H1 (cell line): ENCODE measurements at regions of chr3 and their contacts with region 1.

Region 1: GRCh38 chr3:187112934-187113793 is 26.1 kb downstream of the RPL39L start:
- DNase-seq: no peak
- H3K4me3 ChIP-seq: no peak overlapping the region
- H3K27ac ChIP-seq: no peak overlapping the region
- H3K4me1 ChIP-seq: no peaks in the 10 kb centered on the region
- H3K27me3 ChIP-seq: no peaks in the 10 kb centered on the region
- CTCF ChIP-seq: peak in 2 of 3 experiments; percentile 38 to 42; a peak in 2 of 4 replicates
- EP300 ChIP-seq: no peak
- POLR2A ChIP-seq: no peak
- RAD21 ChIP-seq: peak; percentile 47 to 57

Region 2: GRCh38 chr3:187101184-187102072 is 11.7 kb before region 1 on chr3:
- CTCF ChIA-PET with region 1: interaction called, 35 read pairs
- POLR2A ChIA-PET with region 1: interaction called, 3 read pairs
- DNase-seq: no peak
- H3K4me3 ChIP-seq: no peak overlapping the region
- H3K27ac ChIP-seq: no peak overlapping the region
- H3K4me1 ChIP-seq: peaks cover 0 to 7% (median 1%) of the 10 kb centered on the region in 4 experiments; a peak in 3 of 7 replicates
- H3K27me3 ChIP-seq: no peaks in the 10 kb centered on the region
- CTCF ChIP-seq: no peak
- EP300 ChIP-seq: no peak
- POLR2A ChIP-seq: no peak
- RAD21 ChIP-seq: no peak

Region 3: GRCh38 chr3:187130346-187131066 is 17.3 kb after region 1 on chr3:
- CTCF ChIA-PET with region 1: interaction called, 27 read pairs
- POLR2A ChIA-PET with region 1: interaction called, 3 read pairs
- DNase-seq: no peak
- H3K4me3 ChIP-seq: no peak overlapping the region
- H3K27ac ChIP-seq: no peak overlapping the region
- H3K4me1 ChIP-seq: no peaks in the 10 kb centered on the region
- H3K27me3 ChIP-seq: peaks cover 0 to 2% (median 0%) of the 10 kb centered on the region in 4 experiments; a peak in 1 of 7 replicates
- CTCF ChIP-seq: no peak
- EP300 ChIP-seq: no peak
- POLR2A ChIP-seq: no peak
- RAD21 ChIP-seq: no peak

Region 4: DNA sequence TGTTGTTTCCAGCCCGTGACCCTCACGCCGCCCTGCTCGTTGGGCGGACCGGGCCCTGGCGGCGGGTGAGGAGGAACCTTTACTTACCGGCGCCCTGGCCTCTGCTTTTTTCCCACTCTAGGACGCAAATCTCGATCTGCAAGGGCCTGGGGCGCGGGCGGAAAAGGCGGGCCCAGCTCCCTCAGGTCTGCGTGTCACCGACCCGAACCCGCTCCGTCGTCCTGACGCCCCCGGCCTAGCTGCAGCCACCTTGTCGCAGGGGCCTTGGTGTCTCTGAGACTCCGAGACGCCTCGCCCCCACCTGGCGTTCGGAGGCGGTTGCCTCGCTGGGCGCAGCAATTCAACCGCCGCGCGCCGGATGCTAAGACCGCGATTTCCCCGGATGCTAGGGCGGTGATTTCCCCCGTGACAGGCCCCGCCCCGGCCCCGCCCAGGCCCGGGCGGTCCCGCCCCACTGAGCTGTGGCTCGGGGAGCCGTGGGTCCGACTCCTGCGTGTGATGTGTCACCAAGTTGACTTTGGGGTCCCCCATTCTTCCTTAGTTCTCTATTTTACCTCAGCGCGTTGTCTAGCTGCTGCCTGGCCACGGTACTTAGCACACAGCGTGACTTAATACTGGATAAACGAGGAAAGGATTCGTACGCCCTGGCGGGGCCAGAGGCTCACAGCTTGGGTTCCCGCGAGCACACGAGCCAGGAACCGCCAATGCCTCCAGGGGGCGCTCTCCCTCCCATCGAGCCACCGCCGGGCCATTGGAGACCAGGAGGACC is 26.1 kb after region 1 on chr3 and contains the start of gene RPL39L:
- CTCF ChIA-PET with region 1: interaction called, 20 read pairs
- POLR2A ChIA-PET with region 1: interaction called, 3 read pairs
- DNase-seq: peak; percentile 75 to 95
- H3K4me3 ChIP-seq: peak within 1 kb of the TSS; percentile 49 to 72 (median 59)
- H3K27ac ChIP-seq: peak within 1 kb of the TSS; percentile 78
- H3K4me1 ChIP-seq: peaks cover 0 to 3% (median 0%) of the 10 kb centered on the region in 4 experiments; a peak in 2 of 7 replicates
- H3K27me3 ChIP-seq: no peaks in the 10 kb centered on the region
- CTCF ChIP-seq: peak; percentile 88 to 90 (median 90)
- EP300 ChIP-seq: peak in 1 of 2 experiments; percentile 50; a peak in 1 of 3 replicates
- POLR2A ChIP-seq: peak; percentile 78 to 93
- RAD21 ChIP-seq: peak; percentile 53 to 69; a peak in 3 of 4 replicates
- total RNA-seq, gene RPL39L: 67.7 and 77.0 TPM in 2 replicates

Region 5: DNA sequence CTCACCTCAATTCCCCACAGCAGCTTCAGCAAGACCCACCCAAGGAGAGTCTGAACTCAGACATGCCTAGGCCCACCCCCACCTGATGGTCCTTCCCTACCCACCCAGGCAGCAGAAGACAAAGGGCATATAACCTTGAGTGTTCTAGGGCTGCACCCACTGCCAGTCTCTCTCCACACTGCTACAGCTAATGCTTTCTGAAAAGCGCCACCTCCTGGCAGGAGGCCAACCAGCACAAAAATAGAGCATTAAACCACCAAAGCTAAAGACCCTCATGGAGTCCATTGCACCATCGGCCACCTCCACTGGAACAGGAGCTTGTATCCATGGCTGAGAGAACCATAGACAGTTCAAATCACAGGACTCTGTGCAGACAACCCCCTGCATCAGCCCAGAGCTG is 37.4 kb after region 1 on chr3:
- CTCF ChIA-PET with region 1: interaction called, 26 read pairs
- POLR2A ChIA-PET with region 1: no interaction called
- DNase-seq: peak in 1 of 2 experiments; percentile 77
- H3K4me3 ChIP-seq: no peak overlapping the region
- H3K27ac ChIP-seq: no peak overlapping the region
- H3K4me1 ChIP-seq: no peaks in the 10 kb centered on the region
- H3K27me3 ChIP-seq: no peaks in the 10 kb centered on the region
- CTCF ChIP-seq: peak; percentile 32 to 63 (median 47)
- EP300 ChIP-seq: no peak
- POLR2A ChIP-seq: no peak
- RAD21 ChIP-seq: peak; percentile 22 to 34; a peak in 3 of 4 replicates

Region 6: GRCh38 chr3:187164885-187165543 is 51.9 kb after region 1 on chr3:
- CTCF ChIA-PET with region 1: interaction called, 45 read pairs
- POLR2A ChIA-PET with region 1: interaction called, 5 read pairs
- DNase-seq: peak in 1 of 2 experiments; percentile 56
- H3K4me3 ChIP-seq: peak overlapping the region in 1 of 4 experiments; percentile 6; a peak in 1 of 8 replicates
- H3K27ac ChIP-seq: no peak overlapping the region
- H3K4me1 ChIP-seq: peaks cover 3 to 13% (median 7%) of the 10 kb centered on the region in 4 experiments; a peak in 6 of 7 replicates
- H3K27me3 ChIP-seq: no peaks in the 10 kb centered on the region
- CTCF ChIP-seq: peak in 2 of 3 experiments; percentile 46 to 64; a peak in 2 of 4 replicates
- EP300 ChIP-seq: no peak
- POLR2A ChIP-seq: no peak
- RAD21 ChIP-seq: peak; percentile 46 to 49

Region 7: DNA sequence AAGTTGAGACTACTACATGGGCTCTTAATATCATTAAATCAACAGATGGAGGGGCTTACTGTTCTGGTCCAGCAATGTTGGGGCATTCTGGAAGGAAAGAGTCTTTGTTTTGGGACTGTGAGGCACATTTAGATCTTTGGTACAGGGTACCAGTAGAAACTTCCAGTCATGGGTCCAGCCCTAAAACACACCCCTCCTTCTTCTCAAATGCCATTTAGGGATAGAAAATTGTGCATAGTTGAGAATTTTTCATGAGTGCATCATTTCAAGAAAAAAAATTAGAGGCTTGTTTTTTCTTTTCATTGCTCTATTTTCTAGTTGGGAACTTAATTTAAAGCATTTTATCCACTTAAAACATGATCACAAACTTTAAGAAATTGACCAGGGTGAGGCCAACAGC is 80.0 kb after region 1 on chr3:
- CTCF ChIA-PET with region 1: no interaction called
- POLR2A ChIA-PET with region 1: no interaction called
- DNase-seq: no peak
- H3K4me3 ChIP-seq: no peak overlapping the region
- H3K27ac ChIP-seq: no peak overlapping the region
- H3K4me1 ChIP-seq: peaks cover 0 to 5% (median 1%) of the 10 kb centered on the region in 4 experiments; a peak in 2 of 7 replicates
- H3K27me3 ChIP-seq: no peaks in the 10 kb centered on the region; a peak in 1 of 7 replicates
- CTCF ChIP-seq: no peak
- EP300 ChIP-seq: no peak
- POLR2A ChIP-seq: no peak
- RAD21 ChIP-seq: no peak

Region 8: GRCh38 chr3:187242435-187242834 is 129.3 kb after region 1 on chr3:
- CTCF ChIA-PET with region 1: no interaction called
- POLR2A ChIA-PET with region 1: no interaction called
- DNase-seq: no peak
- H3K4me3 ChIP-seq: no peak overlapping the region
- H3K27ac ChIP-seq: no peak overlapping the region
- H3K4me1 ChIP-seq: no peaks in the 10 kb centered on the region
- H3K27me3 ChIP-seq: peaks cover 0 to 2% (median 0%) of the 10 kb centered on the region in 4 experiments; a peak in 2 of 7 replicates
- CTCF ChIP-seq: no peak
- EP300 ChIP-seq: no peak
- POLR2A ChIP-seq: no peak
- RAD21 ChIP-seq: no peak

Region 9: GRCh38 chr3:187274977-187275338 is 161.8 kb after region 1 on chr3:
- CTCF ChIA-PET with region 1: interaction called, 10 read pairs
- POLR2A ChIA-PET with region 1: no interaction called
- DNase-seq: peak; percentile 59 to 61
- H3K4me3 ChIP-seq: peak overlapping the region in 2 of 4 experiments; percentile 24 to 31; a peak in 4 of 8 replicates
- H3K27ac ChIP-seq: peak overlapping the region; percentile 51; the same call in 1 of the 2 replicates
- H3K4me1 ChIP-seq: peaks cover 7 to 20% (median 15%) of the 10 kb centered on the region in 4 experiments
- H3K27me3 ChIP-seq: no peaks in the 10 kb centered on the region
- CTCF ChIP-seq: no peak
- EP300 ChIP-seq: no peak
- POLR2A ChIP-seq: peak in 1 of 2 experiments; percentile 38; a peak in 1 of 3 replicates
- RAD21 ChIP-seq: no peak

Region 10: GRCh38 chr3:187406927-187407326 is 293.8 kb after region 1 on chr3:
- CTCF ChIA-PET with region 1: no interaction called
- POLR2A ChIA-PET with region 1: no interaction called
- DNase-seq: no peak
- H3K4me3 ChIP-seq: no peak overlapping the region
- H3K27ac ChIP-seq: no peak overlapping the region
- H3K4me1 ChIP-seq: no peaks in the 10 kb centered on the region
- H3K27me3 ChIP-seq: no peaks in the 10 kb centered on the region
- CTCF ChIP-seq: no peak
- EP300 ChIP-seq: no peak
- POLR2A ChIP-seq: no peak
- RAD21 ChIP-seq: no peak